H1 (cell line): ENCODE measurements at regions of chr19 and their contacts with region 1.

Region 1: GRCh38 chr19:41310033-41310758 is at the start of gene CCDC97:
- DNase-seq: peak; percentile 66 to 95
- H3K4me3 ChIP-seq: peak within 1 kb of the TSS; percentile 62 to 91 (median 77)
- H3K27ac ChIP-seq: peak within 1 kb of the TSS; percentile 92
- H3K4me1 ChIP-seq: peaks cover 0 to 10% (median under 1%) of the 10 kb centered on the region in 4 experiments; a peak in 3 of 7 replicates
- H3K27me3 ChIP-seq: no peaks in the 10 kb centered on the region
- CTCF ChIP-seq: no peak
- EP300 ChIP-seq: no peak
- POLR2A ChIP-seq: peak; percentile 81 to 93
- RAD21 ChIP-seq: no peak
- total RNA-seq, gene CCDC97: 21.1 and 27.1 TPM in 2 replicates

Region 2: DNA sequence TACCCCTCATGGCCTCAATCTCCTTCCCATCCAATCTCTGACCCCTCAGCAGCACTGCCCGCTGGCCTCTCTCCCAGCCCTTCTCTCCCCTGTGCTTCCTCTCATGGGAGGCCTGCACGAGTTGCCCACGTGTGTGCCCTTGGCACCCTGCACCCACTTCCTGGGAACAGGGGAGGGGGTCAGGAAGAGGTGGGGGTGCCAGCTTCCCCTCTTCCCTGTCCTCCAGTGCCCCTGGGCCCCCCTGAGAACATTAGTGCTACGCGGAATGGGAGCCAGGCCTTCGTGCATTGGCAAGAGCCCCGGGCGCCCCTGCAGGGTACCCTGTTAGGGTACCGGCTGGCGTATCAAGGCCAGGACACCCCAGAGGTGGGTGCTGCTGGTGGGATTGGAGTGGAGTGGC is 72.0 kb before region 1 on chr19:
- CTCF ChIA-PET with region 1: no interaction called
- POLR2A ChIA-PET with region 1: no interaction called
- DNase-seq: no peak
- H3K4me3 ChIP-seq: no peak overlapping the region
- H3K27ac ChIP-seq: no peak overlapping the region
- H3K4me1 ChIP-seq: no peaks in the 10 kb centered on the region
- H3K27me3 ChIP-seq: no peaks in the 10 kb centered on the region
- CTCF ChIP-seq: no peak
- EP300 ChIP-seq: no peak
- POLR2A ChIP-seq: no peak
- RAD21 ChIP-seq: no peak

Region 3: GRCh38 chr19:41298348-41298964 is 11.7 kb before region 1 on chr19:
- CTCF ChIA-PET with region 1: interaction called, 63 read pairs
- POLR2A ChIA-PET with region 1: interaction called, 579 read pairs
- DNase-seq: no peak
- H3K4me3 ChIP-seq: no peak overlapping the region
- H3K27ac ChIP-seq: no peak overlapping the region
- H3K4me1 ChIP-seq: no peaks in the 10 kb centered on the region
- H3K27me3 ChIP-seq: no peaks in the 10 kb centered on the region
- CTCF ChIP-seq: no peak
- EP300 ChIP-seq: no peak
- POLR2A ChIP-seq: no peak
- RAD21 ChIP-seq: no peak

Region 4: DNA sequence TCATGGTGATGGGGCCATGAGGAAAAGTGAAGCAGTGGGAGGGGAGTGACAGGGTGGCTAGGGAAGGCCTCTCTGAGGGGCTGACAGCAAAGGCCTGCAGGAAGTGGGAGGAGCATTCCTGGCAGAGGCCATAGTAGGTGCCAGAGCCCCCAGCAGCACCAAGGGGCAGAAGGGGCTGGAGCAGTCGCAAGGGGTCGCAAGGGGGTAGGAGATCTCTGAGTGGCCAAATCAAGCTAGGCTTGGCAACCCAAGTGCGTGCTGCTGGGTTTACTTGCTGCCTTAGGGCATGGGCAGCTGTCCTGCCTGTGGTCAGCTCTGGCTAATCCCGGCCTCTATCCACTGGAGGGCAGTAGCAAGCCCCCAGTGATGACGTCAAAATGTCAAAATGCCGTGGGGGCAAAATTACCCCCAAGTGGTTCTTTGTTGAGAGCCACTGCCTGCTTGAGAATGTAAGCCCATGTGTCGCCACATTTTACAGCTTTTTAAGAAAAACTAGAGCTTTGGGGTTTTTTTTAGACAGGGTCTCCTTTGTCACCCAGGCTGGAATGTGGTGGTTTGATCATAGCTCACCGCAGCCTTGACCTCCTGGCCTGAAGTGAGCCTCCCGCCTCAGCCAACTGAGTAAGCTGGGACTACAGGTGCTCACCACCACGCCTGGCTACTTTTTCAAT is 11.5 kb after region 1 on chr19:
- CTCF ChIA-PET with region 1: interaction called, 15 read pairs
- POLR2A ChIA-PET with region 1: interaction called, 137 read pairs
- DNase-seq: peak; percentile 70 to 80
- H3K4me3 ChIP-seq: no peak overlapping the region
- H3K27ac ChIP-seq: peak overlapping the region; percentile 17; the same call in 1 of the 2 replicates
- H3K4me1 ChIP-seq: peaks cover 12 to 27% (median 13%) of the 10 kb centered on the region in 4 experiments
- H3K27me3 ChIP-seq: peaks cover 0 to 6% (median 0%) of the 10 kb centered on the region in 4 experiments; a peak in 2 of 7 replicates
- CTCF ChIP-seq: peak; percentile 65 to 90 (median 69)
- EP300 ChIP-seq: no peak
- POLR2A ChIP-seq: no peak
- RAD21 ChIP-seq: peak; percentile 42 to 54; a peak in 3 of 4 replicates

Region 5: DNA sequence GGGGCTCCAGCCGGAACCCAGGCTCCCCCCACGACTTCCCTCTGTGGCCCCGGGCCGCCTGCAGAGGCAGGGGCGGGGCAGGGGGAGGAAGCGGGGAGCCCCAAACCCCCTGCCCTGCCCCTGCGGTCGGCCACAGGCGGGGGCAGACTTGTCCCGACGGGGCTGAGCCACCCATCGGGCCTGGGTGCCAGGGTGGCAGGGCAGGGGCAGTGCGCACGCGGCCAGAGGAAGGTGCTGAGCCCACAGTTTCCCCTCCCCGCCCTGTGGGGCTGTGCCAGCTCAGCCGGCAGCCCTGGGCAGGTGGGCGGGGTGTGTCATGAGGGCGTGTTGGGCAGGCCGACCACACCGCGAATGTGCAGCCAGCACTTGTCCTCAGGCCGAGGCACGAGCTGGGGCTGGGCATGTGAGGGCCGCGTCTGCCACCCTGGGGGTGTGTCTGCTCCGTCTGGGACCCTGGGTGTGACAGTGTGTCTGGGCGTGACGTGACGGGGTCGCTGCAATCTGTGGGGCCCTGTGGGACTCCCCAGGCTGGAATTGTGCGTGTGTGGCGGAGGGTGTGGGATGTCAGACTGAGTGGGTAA is 17.5 kb after region 1 on chr19:
- CTCF ChIA-PET with region 1: interaction called, 15 read pairs
- POLR2A ChIA-PET with region 1: interaction called, 137 read pairs
- DNase-seq: peak in 1 of 2 experiments; percentile 71
- H3K4me3 ChIP-seq: peak overlapping the region in 3 of 4 experiments; percentile 2 to 54 (median 8); a peak in 4 of 8 replicates
- H3K27ac ChIP-seq: no peak overlapping the region
- H3K4me1 ChIP-seq: peaks cover 15 to 32% (median 23%) of the 10 kb centered on the region in 4 experiments
- H3K27me3 ChIP-seq: peaks cover 0 to 9% (median 0%) of the 10 kb centered on the region in 4 experiments; a peak in 3 of 7 replicates
- CTCF ChIP-seq: no peak
- EP300 ChIP-seq: no peak
- POLR2A ChIP-seq: no peak
- RAD21 ChIP-seq: no peak

Region 6: GRCh38 chr19:41403251-41403957 is 93.2 kb after region 1 on chr19:
- CTCF ChIA-PET with region 1: no interaction called
- POLR2A ChIA-PET with region 1: no interaction called
- DNase-seq: no peak
- H3K4me3 ChIP-seq: no peak overlapping the region
- H3K27ac ChIP-seq: no peak overlapping the region
- H3K4me1 ChIP-seq: peaks cover 0 to 5% (median 2%) of the 10 kb centered on the region in 4 experiments; a peak in 5 of 7 replicates
- H3K27me3 ChIP-seq: no peaks in the 10 kb centered on the region
- CTCF ChIP-seq: no peak
- EP300 ChIP-seq: no peak
- POLR2A ChIP-seq: no peak
- RAD21 ChIP-seq: no peak